ENCODE measurements at regions of chrX and their contacts with region 1.

Region 1: GRCh38 chrX:132615391-132616131 is 126.7 kb upstream of the MBNL3 start:
- DNase-seq: peak; percentile 13
- ATAC-seq: peak; percentile 31
- H3K4me3 Mint-ChIP-seq: no peak overlapping the region
- H3K27ac Mint-ChIP-seq: no peak overlapping the region
- H3K4me1 Mint-ChIP-seq: no peaks in the 10 kb centered on the region
- H3K27me3 Mint-ChIP-seq: no peaks in the 10 kb centered on the region
- CTCF ChIP-seq: no peak

Region 2: GRCh38 chrX:131841496-131842410 is 773.8 kb before region 1 on chrX:
- CTCF ChIA-PET with region 1: no interaction called
- POLR2A ChIA-PET with region 1: no interaction called
- intact Hi-C with region 1: loop called (anchors 1 kb)
- DNase-seq: no peak
- ATAC-seq: peak; percentile 70
- H3K4me3 Mint-ChIP-seq: no peak overlapping the region
- H3K27ac Mint-ChIP-seq: no peak overlapping the region
- H3K4me1 Mint-ChIP-seq: peaks cover 3% of the 10 kb centered on the region
- H3K27me3 Mint-ChIP-seq: no peaks in the 10 kb centered on the region
- CTCF ChIP-seq: no peak

Region 3: GRCh38 chrX:132092439-132093065 is 523.0 kb before region 1 on chrX:
- CTCF ChIA-PET with region 1: interaction called, 13 read pairs
- POLR2A ChIA-PET with region 1: no interaction called
- intact Hi-C with region 1: loop called (anchors 1 kb)
- DNase-seq: no peak
- ATAC-seq: peak; percentile 58
- H3K4me3 Mint-ChIP-seq: no peak overlapping the region
- H3K27ac Mint-ChIP-seq: no peak overlapping the region
- H3K4me1 Mint-ChIP-seq: peaks cover 3% of the 10 kb centered on the region
- H3K27me3 Mint-ChIP-seq: peaks cover 2% of the 10 kb centered on the region
- CTCF ChIP-seq: no peak

Region 4: DNA sequence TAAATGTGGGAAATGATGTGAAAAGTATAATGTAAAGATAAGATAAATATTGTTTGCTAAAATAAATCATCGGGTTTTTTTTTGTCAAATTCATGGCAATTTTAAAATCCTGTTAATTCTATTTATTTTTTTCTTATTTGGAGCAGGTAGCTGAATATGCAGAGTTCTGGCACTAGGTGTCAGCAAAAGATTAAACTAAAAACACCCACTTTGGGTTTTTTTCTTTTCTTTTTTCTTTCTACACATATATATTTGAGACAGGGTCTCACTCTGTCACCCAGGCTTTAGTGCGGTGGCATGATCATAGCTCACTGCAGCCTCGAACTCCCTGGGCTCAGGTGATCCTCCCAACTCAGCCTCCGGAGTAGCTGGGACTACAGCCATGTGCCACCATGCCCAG is 389.4 kb before region 1 on chrX:
- CTCF ChIA-PET with region 1: interaction called, 9 read pairs
- POLR2A ChIA-PET with region 1: no interaction called
- intact Hi-C with region 1: loop called (anchors 1 kb)
- DNase-seq: no peak
- ATAC-seq: no peak
- H3K4me3 Mint-ChIP-seq: no peak overlapping the region
- H3K27ac Mint-ChIP-seq: no peak overlapping the region
- H3K4me1 Mint-ChIP-seq: peaks cover under 1% of the 10 kb centered on the region
- H3K27me3 Mint-ChIP-seq: no peaks in the 10 kb centered on the region
- CTCF ChIP-seq: no peak

Region 5: DNA sequence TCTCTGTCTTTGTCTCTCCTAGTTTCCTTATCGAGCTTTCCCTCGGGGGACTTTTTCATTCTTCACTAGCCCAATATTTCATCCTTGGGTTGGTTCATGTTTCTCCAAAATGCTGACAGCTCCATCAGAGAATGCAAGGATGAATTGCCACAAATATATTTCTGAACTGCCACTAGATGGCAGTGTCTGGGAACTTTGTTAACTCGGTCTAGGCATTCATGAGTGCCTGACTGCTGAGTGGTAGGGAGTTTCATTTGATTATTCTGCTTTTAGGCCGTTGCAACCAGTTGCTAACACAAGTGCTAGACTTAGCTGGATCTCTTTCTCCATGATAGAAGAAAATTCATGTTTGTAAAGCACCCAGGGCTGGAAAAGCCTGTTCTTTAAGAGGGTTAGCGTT is 322.8 kb before region 1 on chrX:
- CTCF ChIA-PET with region 1: interaction called, 63 read pairs
- POLR2A ChIA-PET with region 1: no interaction called
- intact Hi-C with region 1: loop called (anchors 1 kb)
- DNase-seq: no peak
- ATAC-seq: peak; percentile 42
- H3K4me3 Mint-ChIP-seq: no peak overlapping the region
- H3K27ac Mint-ChIP-seq: no peak overlapping the region
- H3K4me1 Mint-ChIP-seq: no peaks in the 10 kb centered on the region
- H3K27me3 Mint-ChIP-seq: no peaks in the 10 kb centered on the region
- CTCF ChIP-seq: no peak

Region 6: GRCh38 chrX:132488819-132489577 is 126.6 kb before region 1 on chrX and contains the start of gene MBNL3:
- CTCF ChIA-PET with region 1: interaction called, 5 read pairs
- POLR2A ChIA-PET with region 1: no interaction called
- intact Hi-C with region 1: loop called (anchors 1 kb)
- DNase-seq: peak; percentile 61
- ATAC-seq: peak; percentile 63
- H3K4me3 Mint-ChIP-seq: peak within 1 kb of the TSS; percentile 98
- H3K27ac Mint-ChIP-seq: peak within 1 kb of the TSS; percentile 99
- H3K4me1 Mint-ChIP-seq: peaks cover 60% of the 10 kb centered on the region
- H3K27me3 Mint-ChIP-seq: no peaks in the 10 kb centered on the region
- CTCF ChIP-seq: no peak
- total RNA-seq, gene MBNL3: 41.0 and 47.0 TPM in 2 replicates

Measured in activated B cell treated with CpG ODN at 0.5 μM for 24 hours (primary cell).